T-cell (primary cell): ENCODE measurements at regions of chr15 and their contacts with region 1.

Region 1: GRCh38 chr15:41523097-41523496 is 9.5 kb upstream of the LTK start:
- DNase-seq: no peak
- ATAC-seq: no peak
- H3K4me3 ChIP-seq: no peak overlapping the region
- H3K4me3 Mint-ChIP-seq: no peak overlapping the region
- H3K27ac ChIP-seq: no peak overlapping the region
- H3K27ac Mint-ChIP-seq: no peak overlapping the region
- H3K4me1 ChIP-seq: no peaks in the 10 kb centered on the region
- H3K4me1 Mint-ChIP-seq: no peaks in the 10 kb centered on the region
- H3K27me3 ChIP-seq: no peaks in the 10 kb centered on the region
- H3K27me3 Mint-ChIP-seq: no peaks in the 10 kb centered on the region

Region 2: DNA sequence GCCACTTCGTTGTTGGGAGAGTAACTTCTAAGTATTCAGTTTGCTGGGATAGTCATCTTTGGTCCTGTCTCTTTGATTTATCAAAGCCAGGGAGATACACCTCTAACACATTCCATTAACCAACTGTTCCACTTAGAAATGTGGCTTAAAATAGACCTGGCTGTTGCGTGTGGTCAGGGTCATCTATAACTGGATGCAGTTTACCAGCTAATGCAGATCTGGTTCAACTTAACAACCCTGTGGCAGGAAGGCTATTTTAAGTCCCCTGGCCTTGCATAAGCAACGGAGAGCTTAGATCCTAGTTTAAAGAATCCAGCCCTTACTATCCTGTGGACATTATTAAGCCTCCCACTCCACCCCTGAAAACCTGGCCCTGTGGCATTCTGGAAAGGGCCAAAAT is 808.1 kb after region 1 on chr15:
- CTCF ChIA-PET with region 1: interaction called in 1 of 2 experiments, 11 read pairs
- POLR2A ChIA-PET with region 1: no interaction called
- DNase-seq: no peak
- ATAC-seq: no peak
- H3K4me3 ChIP-seq: no peak overlapping the region
- H3K4me3 Mint-ChIP-seq: no peak overlapping the region
- H3K27ac ChIP-seq: no peak overlapping the region
- H3K27ac Mint-ChIP-seq: no peak overlapping the region
- H3K4me1 ChIP-seq: no peaks in the 10 kb centered on the region
- H3K4me1 Mint-ChIP-seq: no peaks in the 10 kb centered on the region
- H3K27me3 ChIP-seq: no peaks in the 10 kb centered on the region
- H3K27me3 Mint-ChIP-seq: no peaks in the 10 kb centered on the region